ENCODE measurements at regions of chr15 and their contacts with region 1.

Region 1: DNA sequence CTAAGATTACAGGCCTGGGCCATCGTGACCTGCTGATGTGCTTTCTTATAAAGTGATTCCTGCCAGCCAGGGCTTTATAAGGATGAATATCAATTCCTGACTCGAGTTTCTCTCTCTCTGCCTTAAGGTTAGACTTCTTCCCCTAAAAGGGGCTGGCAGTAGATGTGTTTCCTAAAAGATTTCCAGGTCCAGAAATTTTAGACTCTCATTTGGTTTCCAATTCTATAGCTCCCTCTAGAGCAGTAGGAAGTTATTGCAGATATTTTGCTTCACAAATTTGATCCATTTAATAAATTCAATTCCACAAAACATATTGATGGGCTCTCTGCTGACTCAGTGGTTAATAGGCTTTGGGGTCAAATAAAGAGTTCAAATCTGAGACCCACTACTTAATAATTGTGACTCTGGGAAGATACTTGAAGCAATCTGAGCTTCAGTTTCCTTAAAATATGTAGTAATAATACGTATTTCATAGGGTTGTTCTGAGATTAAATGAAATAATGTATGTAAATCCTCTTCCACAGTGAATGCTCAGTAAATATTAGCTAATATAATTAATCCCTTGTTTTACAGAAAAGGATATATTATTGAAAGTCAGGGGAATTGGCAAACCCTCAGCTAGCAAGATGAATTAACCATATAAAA is 2.1 kb downstream of the TRIM69 start:
- DNase-seq: peak; percentile 28

Region 2: GRCh38 chr15:44711356-44712107 is 26.9 kb before region 1 on chr15 and contains the start of gene B2M:
- CTCF ChIA-PET with region 1: interaction called, 18 read pairs
- POLR2A ChIA-PET with region 1: interaction called, 30 read pairs
- DNase-seq: peak; percentile 88

Region 3: GRCh38 chr15:44753345-44753744 is 14.9 kb after region 1 on chr15:
- CTCF ChIA-PET with region 1: no interaction called
- POLR2A ChIA-PET with region 1: no interaction called
- DNase-seq: no peak

Region 4: DNA sequence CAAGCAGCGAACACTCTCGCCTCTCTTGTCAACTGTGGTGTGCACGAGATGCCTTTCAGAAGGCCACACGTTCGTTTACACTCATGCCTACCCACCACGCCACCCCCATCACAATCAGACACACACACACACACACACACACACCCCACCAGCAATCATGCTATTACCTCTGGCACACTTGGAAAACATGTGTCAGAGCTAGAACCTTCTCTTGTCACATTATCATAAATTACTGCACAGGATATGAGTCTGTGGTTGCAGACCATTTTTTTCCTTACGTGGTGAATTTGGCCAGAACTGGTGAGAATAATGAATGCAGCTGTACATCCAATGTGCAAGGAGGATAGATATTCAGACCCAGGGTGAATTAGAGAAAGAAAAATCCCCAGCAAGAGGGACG is 50.3 kb after region 1 on chr15:
- CTCF ChIA-PET with region 1: no interaction called
- POLR2A ChIA-PET with region 1: no interaction called
- DNase-seq: no peak